Activated T-helper 1 cell treated with anti-CD3 and anti-CD28 coated beads, Interleukin-12 subunit alpha, Interleukin-12 subunit beta, Interleukin-2, Interleukin-4 antibody, amounts not matched to agents 30 ng/mL and 10 ng/mL and 1 ng/mL, durations not matched to agents 14 hours and 24 hours and 36 hours (primary cell): ENCODE measurements at regions of chr1 and their contacts with region 1.

Region 1: GRCh38 chr1:226547754-226548191 is 791 bp upstream of the STUM start:
- DNase-seq: peak; percentile 11
- H3K4me3 Mint-ChIP-seq: no peak overlapping the region
- H3K27ac Mint-ChIP-seq: no peak overlapping the region
- H3K4me1 Mint-ChIP-seq: peaks cover 5% of the 10 kb centered on the region
- H3K27me3 Mint-ChIP-seq: peaks cover 73% of the 10 kb centered on the region

Region 2: DNA sequence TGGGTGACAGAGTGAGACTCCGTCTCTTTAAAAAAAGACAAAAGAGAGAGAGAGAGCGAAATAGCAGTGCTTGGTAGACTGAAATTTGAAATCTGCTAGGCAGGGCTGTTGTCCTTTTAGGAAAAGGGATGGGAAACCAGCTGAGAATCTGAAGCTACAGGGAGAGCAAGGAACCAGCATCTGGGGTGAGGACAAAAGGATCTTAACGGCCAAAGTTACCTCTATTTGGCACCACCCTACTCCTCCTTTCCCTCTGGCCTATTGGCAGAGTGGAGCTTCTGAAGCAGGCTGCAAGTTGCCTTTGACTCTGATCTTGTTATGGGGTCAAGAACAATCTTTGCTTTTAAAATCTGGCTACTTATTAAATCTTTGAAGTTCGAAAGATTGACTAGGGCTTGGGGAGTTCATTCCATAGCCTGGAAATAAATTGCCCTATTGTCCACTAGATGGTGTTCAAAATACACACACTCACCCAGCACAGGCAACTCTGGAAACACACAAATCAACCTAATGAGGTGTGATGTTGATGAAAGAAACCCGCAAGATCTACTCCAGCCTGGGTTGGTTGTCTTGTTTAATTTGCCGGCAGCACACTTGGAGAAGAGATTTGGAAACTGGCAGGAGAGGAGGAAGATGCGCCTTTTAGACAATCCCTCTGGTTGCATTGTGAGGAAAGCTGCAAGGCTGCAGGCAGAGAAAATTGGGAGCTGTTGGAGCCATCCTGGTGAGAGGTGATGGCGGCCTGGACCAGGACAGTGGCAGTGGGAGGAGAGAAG is 123.4 kb before region 1 on chr1:
- intact Hi-C with region 1: loop called (anchors 2 kb)
- DNase-seq: no peak
- H3K4me3 Mint-ChIP-seq: no peak overlapping the region
- H3K27ac Mint-ChIP-seq: peak overlapping the region; percentile 56
- H3K4me1 Mint-ChIP-seq: peaks cover 7% of the 10 kb centered on the region
- H3K27me3 Mint-ChIP-seq: peaks cover 10% of the 10 kb centered on the region

Region 3: GRCh38 chr1:226444901-226445300 is 102.9 kb before region 1 on chr1:
- intact Hi-C with region 1: loop called (anchors 5 kb)
- DNase-seq: peak; percentile 73
- H3K4me3 Mint-ChIP-seq: peak overlapping the region; percentile 8
- H3K27ac Mint-ChIP-seq: peak overlapping the region; percentile 74
- H3K4me1 Mint-ChIP-seq: peaks cover 32% of the 10 kb centered on the region
- H3K27me3 Mint-ChIP-seq: peaks cover 47% of the 10 kb centered on the region

Region 4: DNA sequence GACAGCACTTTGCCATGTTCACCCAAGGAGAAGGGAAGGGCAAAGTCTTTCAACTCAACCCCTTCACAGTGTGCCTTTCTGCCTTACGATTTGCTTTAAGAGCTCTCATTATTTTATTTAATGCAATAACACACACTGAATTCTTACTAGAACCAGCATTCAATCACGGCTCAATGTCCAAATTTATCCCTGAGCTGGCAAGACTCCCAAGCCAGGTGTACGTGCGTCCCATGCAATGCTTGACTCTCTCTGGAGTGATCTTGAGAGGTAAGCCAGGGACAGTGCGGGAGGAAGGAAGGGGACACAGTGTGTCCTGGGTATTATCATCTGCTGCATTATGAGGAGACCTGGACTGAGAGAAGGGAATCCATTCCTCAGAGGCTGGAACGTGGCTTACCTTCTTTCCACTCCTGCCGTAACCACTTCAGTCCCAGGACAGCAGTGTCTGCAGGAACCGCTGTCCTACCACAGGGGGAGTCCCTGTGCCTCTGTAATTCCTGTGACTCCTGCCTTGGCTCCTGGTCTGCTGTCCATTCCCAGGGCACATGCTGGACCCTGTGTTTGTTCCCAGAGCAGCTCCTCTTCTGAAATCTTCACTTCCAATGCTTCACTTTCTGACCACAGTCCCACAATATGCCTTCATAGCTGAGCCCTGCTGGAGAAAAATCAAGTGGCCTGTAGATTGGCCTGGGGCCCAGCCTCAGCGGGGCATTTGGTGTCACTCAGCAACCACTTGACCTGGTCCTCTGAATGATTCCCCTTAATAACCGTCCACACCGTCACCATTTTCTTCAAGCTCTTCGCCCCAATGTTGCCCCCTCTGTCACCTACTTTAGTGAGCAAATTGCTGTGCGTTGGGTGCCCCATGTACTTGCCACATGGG is 27.8 kb before region 1 on chr1:
- intact Hi-C with region 1: no loop called
- DNase-seq: no peak
- H3K4me3 Mint-ChIP-seq: no peak overlapping the region
- H3K27ac Mint-ChIP-seq: no peak overlapping the region
- H3K4me1 Mint-ChIP-seq: no peaks in the 10 kb centered on the region
- H3K27me3 Mint-ChIP-seq: peaks cover 5% of the 10 kb centered on the region

Region 5: DNA sequence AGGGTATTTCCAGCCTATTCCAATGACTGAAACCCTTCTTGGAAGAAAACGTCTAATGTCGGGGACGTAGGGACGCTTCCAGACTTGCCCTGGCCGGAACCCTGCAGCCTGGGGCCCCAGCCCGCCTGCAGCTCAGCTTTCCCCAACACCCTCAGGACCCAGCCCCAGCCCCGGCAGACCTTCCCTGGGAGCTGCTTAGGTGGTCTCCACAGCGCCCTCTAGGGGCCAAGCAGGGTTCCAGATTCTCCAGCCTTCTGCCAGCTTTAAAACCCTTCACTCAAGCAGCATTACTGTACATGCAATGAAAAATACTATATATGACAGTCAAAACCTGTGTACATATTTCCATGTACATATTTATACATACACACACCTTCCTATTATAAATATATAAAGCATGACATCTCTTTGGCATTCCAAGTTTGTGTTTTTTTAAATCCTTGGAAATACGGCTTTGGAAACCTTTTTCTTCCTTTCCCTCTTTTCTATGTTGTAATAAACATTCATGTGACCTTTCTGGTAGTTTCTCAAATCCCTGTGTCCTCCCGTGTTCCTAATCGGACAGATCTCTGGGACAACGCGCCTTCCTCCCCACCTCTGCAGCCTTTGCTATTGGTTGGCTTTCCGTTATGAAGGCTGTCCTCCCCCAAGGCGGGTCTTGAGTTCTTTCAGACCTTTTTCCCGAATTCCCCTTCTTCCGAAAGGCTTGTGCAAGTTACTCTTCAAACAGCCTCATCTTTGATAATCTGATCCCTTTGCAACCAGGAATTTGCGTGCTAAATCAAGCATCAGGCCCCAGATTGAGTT is 61.1 kb after region 1 on chr1:
- intact Hi-C with region 1: loop called (anchors 5 kb)
- DNase-seq: peak; percentile 44
- H3K4me3 Mint-ChIP-seq: no peak overlapping the region
- H3K27ac Mint-ChIP-seq: no peak overlapping the region
- H3K4me1 Mint-ChIP-seq: peaks cover under 1% of the 10 kb centered on the region
- H3K27me3 Mint-ChIP-seq: peaks cover 5% of the 10 kb centered on the region

Region 6: DNA sequence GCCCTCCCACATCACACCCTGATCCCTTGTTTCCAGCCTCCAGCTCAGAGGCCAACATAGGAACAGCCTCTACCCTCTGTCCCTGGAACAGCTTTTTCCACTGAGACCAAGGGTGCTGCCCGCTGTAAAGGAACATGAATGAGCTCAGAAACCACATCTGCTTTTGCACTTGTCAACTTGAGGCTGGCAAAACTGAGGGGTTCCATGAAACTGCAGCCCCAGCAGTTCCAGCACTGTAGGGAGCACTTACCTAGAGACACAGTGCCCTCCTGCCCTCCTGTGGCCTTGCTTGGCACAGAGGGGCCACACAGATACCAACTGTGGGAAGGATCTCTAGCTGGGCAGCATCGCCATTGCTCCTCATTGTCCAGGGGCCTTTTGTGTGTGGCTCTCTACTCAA is 139.7 kb after region 1 on chr1:
- intact Hi-C with region 1: no loop called
- DNase-seq: no peak
- H3K4me3 Mint-ChIP-seq: peak overlapping the region; percentile 29
- H3K27ac Mint-ChIP-seq: peak overlapping the region; percentile 83
- H3K4me1 Mint-ChIP-seq: peaks cover 97% of the 10 kb centered on the region
- H3K27me3 Mint-ChIP-seq: no peaks in the 10 kb centered on the region